Natural killer cell (primary cell): ENCODE measurements at regions of chr19 and their contacts with region 1.

Region 1: DNA sequence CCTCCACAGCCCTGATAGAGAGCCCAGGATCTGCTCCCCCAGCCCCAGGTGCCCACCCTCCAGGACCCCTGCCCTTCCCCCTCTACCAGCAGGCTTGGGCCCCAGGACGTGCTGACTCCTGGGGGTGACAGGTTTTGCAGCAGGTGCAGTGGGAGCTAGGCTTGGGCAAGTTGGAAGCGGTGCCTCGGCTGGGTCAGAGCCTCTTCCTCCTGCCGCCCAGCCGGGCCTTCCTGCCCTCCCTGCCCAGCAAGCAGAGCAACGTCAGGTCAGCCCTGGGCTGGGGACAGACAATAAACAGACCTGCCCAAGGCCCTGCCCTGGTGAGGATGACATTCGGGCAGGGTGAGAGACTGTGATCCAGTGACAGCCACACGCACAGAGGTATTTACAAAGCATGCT is 9.2 kb upstream of the NCCRP1 start:
- DNase-seq: no peak
- ATAC-seq: no peak
- H3K4me3 ChIP-seq: no peak overlapping the region
- H3K4me3 Mint-ChIP-seq: no peak overlapping the region
- H3K27ac ChIP-seq: no peak overlapping the region
- H3K27ac Mint-ChIP-seq: no peak overlapping the region
- H3K4me1 ChIP-seq: no peaks in the 10 kb centered on the region
- H3K4me1 Mint-ChIP-seq: no peaks in the 10 kb centered on the region
- H3K27me3 ChIP-seq: no peaks in the 10 kb centered on the region
- H3K27me3 Mint-ChIP-seq: peaks cover 0 to 3% of the 10 kb centered on the region in 2 donors
- CTCF ChIP-seq: peak; percentile 18

Region 2: GRCh38 chr19:39110263-39110967 is 77.1 kb before region 1 on chr19:
- intact Hi-C with region 1: loop called (anchors 1 kb)
- DNase-seq: peak; percentile 66 to 83
- ATAC-seq: peak; percentile 65 to 92 (median 88)
- H3K4me3 ChIP-seq: no peak overlapping the region
- H3K4me3 Mint-ChIP-seq: no peak overlapping the region
- H3K27ac ChIP-seq: no peak overlapping the region
- H3K27ac Mint-ChIP-seq: no peak overlapping the region
- H3K4me1 ChIP-seq: peaks cover 6% of the 10 kb centered on the region
- H3K4me1 Mint-ChIP-seq: peaks cover 6 to 8% of the 10 kb centered on the region in 2 donors
- H3K27me3 ChIP-seq: no peaks in the 10 kb centered on the region
- H3K27me3 Mint-ChIP-seq: peaks cover 7% of the 10 kb centered on the region in 2 donors
- CTCF ChIP-seq: peak; percentile 87

Region 3: DNA sequence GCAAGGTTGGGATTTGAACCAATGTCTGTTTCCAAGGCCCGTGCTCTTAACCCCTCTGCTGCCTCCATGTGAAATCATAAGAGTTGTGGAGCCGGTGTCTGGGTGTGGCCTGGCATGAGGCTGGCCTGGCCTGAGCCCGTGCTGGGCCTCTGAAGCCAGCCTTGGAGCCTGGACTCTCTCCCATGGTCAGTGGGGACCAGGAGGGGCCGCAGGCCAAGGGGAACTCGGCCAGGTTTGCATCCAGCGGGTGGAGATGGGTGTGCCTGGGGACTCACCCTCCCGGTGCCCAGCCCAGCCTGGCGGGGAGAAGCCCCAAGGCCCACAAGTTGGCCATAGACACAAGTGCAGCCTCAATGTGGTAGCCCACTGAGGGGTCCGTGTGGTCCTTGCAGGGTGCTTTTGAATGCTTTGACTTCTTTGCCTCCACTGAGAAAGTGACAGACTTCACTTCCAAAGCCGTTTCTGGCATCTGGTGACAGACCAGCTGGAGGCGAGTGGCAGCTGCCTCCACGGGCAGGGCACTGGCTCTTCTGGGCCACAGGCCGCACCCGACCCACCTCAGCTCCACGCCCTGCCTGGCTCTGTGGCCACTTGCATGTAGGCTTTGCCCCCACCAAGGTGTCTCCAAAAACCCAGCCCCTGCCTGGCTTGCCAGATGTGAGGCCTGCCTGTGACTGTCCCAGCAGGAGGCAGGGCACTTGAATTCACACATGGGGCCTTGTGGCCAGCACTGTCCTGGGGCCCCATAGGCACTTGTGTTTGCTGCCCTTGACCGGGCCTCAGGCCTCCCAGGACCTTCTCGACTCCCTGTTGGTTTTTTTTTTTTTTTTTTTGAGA is 16.9 kb before region 1 on chr19:
- intact Hi-C with region 1: no loop called
- DNase-seq: no peak
- ATAC-seq: no peak
- H3K4me3 ChIP-seq: no peak overlapping the region
- H3K4me3 Mint-ChIP-seq: no peak overlapping the region
- H3K27ac ChIP-seq: no peak overlapping the region
- H3K27ac Mint-ChIP-seq: peak overlapping the region in 1 of 2 donors; percentile 65
- H3K4me1 ChIP-seq: no peaks in the 10 kb centered on the region
- H3K4me1 Mint-ChIP-seq: peaks cover 0 to 6% of the 10 kb centered on the region in 2 donors
- H3K27me3 ChIP-seq: no peaks in the 10 kb centered on the region
- H3K27me3 Mint-ChIP-seq: no peaks in the 10 kb centered on the region
- CTCF ChIP-seq: no peak